Activated B cell treated with CpG ODN at 0.5 μM for 24 hours (primary cell): ENCODE measurements at regions of chrX and their contacts with region 1.

Region 1: DNA sequence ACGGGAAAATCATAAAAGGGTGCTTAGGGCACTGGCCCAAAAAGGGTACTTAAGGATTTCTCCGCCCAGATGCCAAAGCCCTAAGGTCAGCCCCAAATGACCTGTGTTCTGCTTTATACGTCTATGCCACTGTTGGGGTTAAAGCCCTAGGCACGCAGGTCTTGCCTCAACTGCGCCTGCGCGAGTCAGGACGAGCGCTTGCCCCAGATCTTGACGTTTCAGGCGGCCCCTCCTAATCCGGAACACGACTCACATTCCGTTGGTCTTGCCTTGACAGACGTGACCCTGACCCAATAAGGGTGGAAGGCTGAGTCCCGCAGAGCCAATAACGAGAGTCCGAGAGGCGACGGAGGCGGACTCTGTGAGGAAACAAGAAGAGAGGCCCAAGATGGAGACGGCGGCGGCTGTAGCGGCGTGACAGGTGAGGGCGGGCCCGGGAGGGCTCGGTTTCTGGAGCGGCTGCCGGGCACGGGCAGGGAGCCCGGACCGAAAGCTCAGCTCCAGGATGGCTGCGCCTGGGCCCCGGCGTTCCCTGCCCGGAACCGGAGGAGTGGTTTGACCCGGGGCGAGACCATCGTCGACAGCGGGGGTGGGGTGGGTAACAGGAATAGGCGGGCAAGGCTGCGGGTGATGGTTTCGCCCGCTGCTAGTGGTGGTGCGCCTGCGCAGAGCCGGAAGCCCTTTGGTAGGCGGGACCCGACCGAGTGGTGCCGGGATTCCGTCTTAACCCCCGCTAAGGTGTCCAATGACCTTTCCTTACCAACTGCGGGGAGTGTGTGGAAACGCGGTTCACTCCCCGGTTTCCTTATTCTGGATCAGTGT is at the start of gene ARAF:
- DNase-seq: peak; percentile 77
- ATAC-seq: peak; percentile 88
- H3K4me3 Mint-ChIP-seq: peak within 1 kb of the TSS; percentile 89
- H3K27ac Mint-ChIP-seq: peak within 1 kb of the TSS; percentile 96
- H3K4me1 Mint-ChIP-seq: peaks cover 44% of the 10 kb centered on the region
- H3K27me3 Mint-ChIP-seq: no peaks in the 10 kb centered on the region
- CTCF ChIP-seq: no peak
- total RNA-seq, gene ARAF: 97.2 and 108 TPM in 2 replicates

Region 2: GRCh38 chrX:47233337-47234113 is 327.5 kb before region 1 on chrX:
- CTCF ChIA-PET with region 1: no interaction called
- POLR2A ChIA-PET with region 1: interaction called, 4 read pairs
- intact Hi-C with region 1: loop called (anchors 2 kb)
- DNase-seq: peak; percentile 74
- ATAC-seq: peak; percentile 90
- H3K4me3 Mint-ChIP-seq: peak overlapping the region; percentile 92
- H3K27ac Mint-ChIP-seq: peak overlapping the region; percentile 98
- H3K4me1 Mint-ChIP-seq: peaks cover 15% of the 10 kb centered on the region
- H3K27me3 Mint-ChIP-seq: no peaks in the 10 kb centered on the region
- CTCF ChIP-seq: no peak

Region 3: DNA sequence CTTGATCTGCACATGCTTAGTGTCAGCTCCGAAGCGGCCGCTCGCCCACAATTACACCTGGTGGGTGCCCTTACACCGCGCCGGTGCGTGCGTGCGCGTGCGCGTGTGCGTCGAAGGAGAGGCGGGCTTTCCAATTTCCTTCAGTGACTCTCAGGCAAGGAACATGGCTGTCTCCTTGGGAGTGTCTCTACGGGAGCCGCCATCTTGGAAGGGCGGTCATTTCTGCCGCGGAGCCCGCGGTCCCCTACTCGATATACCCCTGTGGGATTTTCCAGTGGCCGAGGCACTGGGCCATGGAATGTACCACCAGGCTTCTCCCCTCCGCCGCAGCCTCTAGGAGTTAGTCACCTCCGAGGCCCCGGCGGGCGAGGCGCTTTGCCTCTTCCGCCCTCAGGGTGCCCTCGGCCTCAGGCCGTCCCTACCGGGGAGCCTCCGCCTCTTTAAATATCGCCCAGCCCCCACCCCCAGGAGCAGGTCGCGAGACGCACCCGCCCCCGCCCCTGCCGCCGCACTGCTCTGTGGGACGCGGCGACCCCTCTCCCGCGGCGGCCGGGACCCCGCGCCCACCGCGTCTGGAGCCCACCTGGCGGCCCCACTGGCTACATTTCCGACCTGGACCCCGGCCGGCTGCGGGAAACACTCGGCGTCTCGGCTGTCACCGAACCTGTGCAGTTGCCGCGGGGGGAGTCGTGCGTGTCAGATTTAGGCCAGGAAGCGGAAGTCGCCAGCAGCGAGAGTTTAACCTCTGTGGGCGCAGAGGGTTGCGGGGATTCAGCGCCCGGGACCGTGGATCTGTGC is 78.3 kb before region 1 on chrX and contains the start of gene ZNF41:
- CTCF ChIA-PET with region 1: no interaction called
- POLR2A ChIA-PET with region 1: interaction called, 5 read pairs
- intact Hi-C with region 1: loop called (anchors 2 kb)
- DNase-seq: peak; percentile 63
- ATAC-seq: peak; percentile 78
- H3K4me3 Mint-ChIP-seq: peak within 1 kb of the TSS; percentile 90
- H3K27ac Mint-ChIP-seq: peak within 1 kb of the TSS; percentile 92
- H3K4me1 Mint-ChIP-seq: peaks cover 42% of the 10 kb centered on the region
- H3K27me3 Mint-ChIP-seq: no peaks in the 10 kb centered on the region
- CTCF ChIP-seq: no peak
- total RNA-seq, gene ZNF41: 15.4 and 19.2 TPM in 2 replicates

Region 4: GRCh38 chrX:47631676-47632075 is 70.6 kb after region 1 on chrX:
- CTCF ChIA-PET with region 1: no interaction called
- POLR2A ChIA-PET with region 1: interaction called, 13 read pairs
- intact Hi-C with region 1: loop called (anchors 5 kb)
- DNase-seq: no peak
- ATAC-seq: no peak
- H3K4me3 Mint-ChIP-seq: no peak overlapping the region
- H3K27ac Mint-ChIP-seq: no peak overlapping the region
- H3K4me1 Mint-ChIP-seq: peaks cover 22% of the 10 kb centered on the region
- H3K27me3 Mint-ChIP-seq: no peaks in the 10 kb centered on the region
- CTCF ChIP-seq: no peak

Region 5: DNA sequence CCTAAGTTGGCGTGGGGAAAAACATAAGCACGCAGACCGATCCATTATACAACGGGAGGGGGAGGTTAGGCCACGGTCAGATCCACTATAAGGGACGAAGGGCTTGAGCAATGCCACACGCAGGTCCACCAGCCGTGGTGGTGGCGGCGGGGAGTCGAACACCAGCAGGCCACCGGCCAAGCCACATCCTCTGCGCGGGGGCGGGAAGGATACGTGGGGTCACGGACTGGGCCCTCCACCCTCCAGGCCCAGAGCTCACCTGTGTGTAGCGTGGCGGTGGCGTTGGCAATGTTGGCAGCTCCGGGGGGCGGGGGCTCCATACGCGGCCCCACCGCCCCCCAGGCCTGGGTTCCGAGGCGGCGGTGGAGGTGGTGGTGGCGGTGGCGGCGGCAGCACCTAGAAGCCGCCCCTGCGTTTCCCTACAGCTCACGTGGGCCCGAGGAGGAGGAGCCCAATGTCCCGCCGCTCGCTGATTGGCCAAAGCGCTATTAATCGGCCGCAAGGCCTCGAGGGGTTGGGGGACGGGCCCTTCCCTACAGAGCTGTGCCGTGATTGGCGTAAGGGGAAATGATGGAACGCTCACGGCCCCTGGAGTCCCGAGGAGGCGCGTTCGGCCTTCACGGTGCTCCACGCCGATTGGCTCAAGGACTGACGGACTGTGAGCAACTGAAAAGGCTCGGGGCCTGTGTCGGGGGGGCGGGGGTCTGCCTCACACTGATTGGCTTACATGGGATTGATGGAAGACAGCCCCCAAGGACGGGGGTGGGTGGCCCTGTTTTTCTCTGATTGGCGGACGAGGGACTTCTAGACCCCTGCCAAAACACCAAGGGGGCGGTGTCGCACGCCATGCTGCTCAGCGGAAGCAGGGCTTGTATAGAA is 89.4 kb after region 1 on chrX and contains the start of gene ELK1:
- CTCF ChIA-PET with region 1: no interaction called
- POLR2A ChIA-PET with region 1: interaction called, 10 read pairs
- intact Hi-C with region 1: loop called (anchors 1 kb)
- DNase-seq: peak; percentile 76
- ATAC-seq: peak; percentile 92
- H3K4me3 Mint-ChIP-seq: peak within 1 kb of the TSS; percentile 88
- H3K27ac Mint-ChIP-seq: peak within 1 kb of the TSS; percentile 87
- H3K4me1 Mint-ChIP-seq: peaks cover 29% of the 10 kb centered on the region
- H3K27me3 Mint-ChIP-seq: no peaks in the 10 kb centered on the region
- CTCF ChIP-seq: no peak
- total RNA-seq, gene ELK1: 26.5 and 31.8 TPM in 2 replicates

Region 6: GRCh38 chrX:47836164-47837072 is 275.4 kb after region 1 on chrX and contains the start of gene ZNF81:
- CTCF ChIA-PET with region 1: no interaction called
- POLR2A ChIA-PET with region 1: interaction called, 3 read pairs
- intact Hi-C with region 1: loop called (anchors 10 kb)
- DNase-seq: peak; percentile 76
- ATAC-seq: peak; percentile 95
- H3K4me3 Mint-ChIP-seq: peak within 1 kb of the TSS; percentile 93
- H3K27ac Mint-ChIP-seq: peak within 1 kb of the TSS; percentile 93
- H3K4me1 Mint-ChIP-seq: peaks cover 21% of the 10 kb centered on the region
- H3K27me3 Mint-ChIP-seq: no peaks in the 10 kb centered on the region
- CTCF ChIP-seq: no peak
- total RNA-seq, gene ZNF81: 11.0 and 15.3 TPM in 2 replicates

Region 7: GRCh38 chrX:48071064-48071985 is 510.3 kb after region 1 on chrX and contains the start of gene ZNF630:
- CTCF ChIA-PET with region 1: no interaction called
- POLR2A ChIA-PET with region 1: no interaction called
- intact Hi-C with region 1: no loop called
- DNase-seq: no peak
- ATAC-seq: no peak
- H3K4me3 Mint-ChIP-seq: no peak within 1 kb of the TSS
- H3K27ac Mint-ChIP-seq: no peak within 1 kb of the TSS
- H3K4me1 Mint-ChIP-seq: no peaks in the 10 kb centered on the region
- H3K27me3 Mint-ChIP-seq: no peaks in the 10 kb centered on the region
- CTCF ChIP-seq: no peak
- total RNA-seq, gene ZNF630: not detected in 2 replicates

Region 8: GRCh38 chrX:49030281-49030680 is 1469.2 kb after region 1 on chrX:
- CTCF ChIA-PET with region 1: no interaction called
- POLR2A ChIA-PET with region 1: no interaction called
- intact Hi-C with region 1: no loop called
- DNase-seq: no peak
- ATAC-seq: no peak
- H3K4me3 Mint-ChIP-seq: no peak overlapping the region
- H3K27ac Mint-ChIP-seq: no peak overlapping the region
- H3K4me1 Mint-ChIP-seq: peaks cover 9% of the 10 kb centered on the region
- H3K27me3 Mint-ChIP-seq: no peaks in the 10 kb centered on the region
- CTCF ChIP-seq: no peak